ENCODE measurements at regions of chr6 and their contacts with region 1.

Region 1: GRCh38 chr6:110981202-110981600 is 637 bp upstream of the RPF2 start:
- DNase-seq: no peak
- H3K4me3 ChIP-seq: peak overlapping the region; percentile 58 to 85
- H3K27ac ChIP-seq: peak overlapping the region; percentile 83 to 94
- H3K4me1 ChIP-seq: no peaks in the 10 kb centered on the region
- H3K27me3 ChIP-seq: no peaks in the 10 kb centered on the region
- CTCF ChIP-seq: no peak
- POLR2A ChIP-seq: no peak

Region 2: DNA sequence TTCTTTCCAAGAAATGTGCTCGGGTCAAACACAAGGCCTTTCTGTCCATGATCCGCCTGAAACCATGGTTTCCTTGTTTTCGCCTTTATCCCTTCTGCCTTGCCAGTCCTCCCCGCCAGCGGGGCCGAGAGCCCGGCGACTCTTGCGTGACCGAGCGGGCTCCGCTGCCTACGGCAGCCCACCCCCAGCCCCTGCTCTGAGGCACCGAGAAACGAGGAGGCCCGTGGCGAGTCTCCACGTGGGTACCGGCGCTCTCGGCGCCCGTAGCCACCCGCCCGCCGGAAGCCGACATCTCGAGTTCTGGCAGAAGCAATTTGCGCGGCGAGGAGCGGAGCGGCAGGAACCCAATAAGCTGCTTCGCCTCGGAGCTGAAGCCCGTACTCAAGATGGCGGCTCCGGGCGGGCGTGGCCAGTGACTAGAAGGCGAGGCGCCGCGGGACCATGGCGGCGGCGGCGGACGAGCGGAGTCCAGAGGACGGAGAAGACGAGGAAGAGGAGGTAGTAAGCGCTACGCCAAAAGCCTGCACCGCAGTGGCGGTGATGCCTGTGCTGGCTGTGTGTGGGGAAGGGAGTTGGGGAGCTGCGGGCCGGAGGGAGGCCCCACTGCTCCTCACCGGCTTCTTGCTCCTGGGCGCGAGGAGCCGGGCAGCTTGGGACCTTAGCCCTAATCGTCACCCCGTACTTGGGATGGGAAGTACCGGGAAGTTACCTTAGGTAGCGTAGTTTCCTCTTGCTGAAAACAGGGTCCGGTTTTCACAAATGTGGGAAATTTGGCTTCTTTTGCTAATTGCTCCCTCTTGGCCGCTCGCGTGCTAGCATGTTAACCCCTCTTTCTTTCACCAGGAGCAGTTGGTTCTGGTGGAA is 22.6 kb before region 1 on chr6 and contains the start of gene GTF3C6:
- intact Hi-C with region 1: loop called (anchors 2 kb)
- DNase-seq: peak; percentile 92
- H3K4me3 ChIP-seq: peak within 1 kb of the TSS; percentile 69 to 91
- H3K27ac ChIP-seq: peak within 1 kb of the TSS; percentile 84 to 92
- H3K4me1 ChIP-seq: no peaks in the 10 kb centered on the region
- H3K27me3 ChIP-seq: no peaks in the 10 kb centered on the region
- CTCF ChIP-seq: peak in 1 of 4 experiments; percentile 17
- POLR2A ChIP-seq: peak; percentile 73
- total RNA-seq, gene GTF3C6: 72.0 to 98.1 TPM

Region 3: GRCh38 chr6:111027219-111027618 is 46.0 kb after region 1 on chr6:
- intact Hi-C with region 1: no loop called
- DNase-seq: no peak
- H3K4me3 ChIP-seq: no peak overlapping the region
- H3K27ac ChIP-seq: no peak overlapping the region
- H3K4me1 ChIP-seq: no peaks in the 10 kb centered on the region
- H3K27me3 ChIP-seq: no peaks in the 10 kb centered on the region
- CTCF ChIP-seq: no peak
- POLR2A ChIP-seq: no peak

Measured in prostate gland (tissue), 2 donors.